HepG2 (cell line): ENCODE measurements at regions of chr20 and their contacts with region 1.

Region 1: GRCh38 chr20:36886859-36887751 is 11.2 kb downstream of the TLDC2 start:
- DNase-seq: peak; percentile 80
- ATAC-seq: peak; percentile 92
- H3K4me3 ChIP-seq: peak overlapping the region; percentile 2 to 63 (median 35); a peak in 4 of 6 replicates
- H3K27ac ChIP-seq: no peak overlapping the region
- H3K4me1 ChIP-seq: peaks cover 21% of the 10 kb centered on the region
- H3K27me3 ChIP-seq: no peaks in the 10 kb centered on the region
- CTCF ChIP-seq: peak; percentile 100
- EP300 ChIP-seq: no peak
- POLR2A ChIP-seq: 0 out of 4 replicates have a peak, but pooled peaks of 1 of the 2 experiments have one; percentile 10
- RAD21 ChIP-seq: peak; percentile 99

Region 2: DNA sequence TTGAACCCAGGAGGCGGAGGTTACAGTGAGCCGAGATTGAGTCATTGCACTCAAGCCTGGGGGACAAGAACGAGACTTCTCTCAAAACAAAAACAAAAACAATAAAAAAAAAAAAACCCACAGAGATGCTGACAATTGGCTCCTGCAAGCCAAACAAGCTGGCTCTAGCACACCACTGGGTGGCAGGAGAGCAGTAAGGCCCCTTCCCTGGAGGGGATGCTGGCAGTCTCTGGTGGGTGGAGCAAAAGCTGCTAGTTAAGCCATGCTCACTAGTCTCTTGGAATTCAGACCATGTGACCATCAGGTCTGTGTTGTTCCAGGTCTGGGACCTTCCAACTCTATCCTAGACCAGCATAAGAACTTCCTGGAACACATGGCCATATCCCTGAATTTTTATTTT is 94.7 kb before region 1 on chr20:
- CTCF ChIA-PET with region 1: interaction called, 3 read pairs
- POLR2A ChIA-PET with region 1: no interaction called
- in situ Hi-C with region 1: no loop called
- intact Hi-C with region 1: loop called (anchors 1 kb)
- DNase-seq: peak; percentile 80
- ATAC-seq: peak; percentile 77
- H3K4me3 ChIP-seq: no peak overlapping the region
- H3K27ac ChIP-seq: no peak overlapping the region
- H3K4me1 ChIP-seq: no peaks in the 10 kb centered on the region
- H3K27me3 ChIP-seq: no peaks in the 10 kb centered on the region
- CTCF ChIP-seq: peak; percentile 54
- EP300 ChIP-seq: no peak
- POLR2A ChIP-seq: no peak
- RAD21 ChIP-seq: no peak

Region 3: DNA sequence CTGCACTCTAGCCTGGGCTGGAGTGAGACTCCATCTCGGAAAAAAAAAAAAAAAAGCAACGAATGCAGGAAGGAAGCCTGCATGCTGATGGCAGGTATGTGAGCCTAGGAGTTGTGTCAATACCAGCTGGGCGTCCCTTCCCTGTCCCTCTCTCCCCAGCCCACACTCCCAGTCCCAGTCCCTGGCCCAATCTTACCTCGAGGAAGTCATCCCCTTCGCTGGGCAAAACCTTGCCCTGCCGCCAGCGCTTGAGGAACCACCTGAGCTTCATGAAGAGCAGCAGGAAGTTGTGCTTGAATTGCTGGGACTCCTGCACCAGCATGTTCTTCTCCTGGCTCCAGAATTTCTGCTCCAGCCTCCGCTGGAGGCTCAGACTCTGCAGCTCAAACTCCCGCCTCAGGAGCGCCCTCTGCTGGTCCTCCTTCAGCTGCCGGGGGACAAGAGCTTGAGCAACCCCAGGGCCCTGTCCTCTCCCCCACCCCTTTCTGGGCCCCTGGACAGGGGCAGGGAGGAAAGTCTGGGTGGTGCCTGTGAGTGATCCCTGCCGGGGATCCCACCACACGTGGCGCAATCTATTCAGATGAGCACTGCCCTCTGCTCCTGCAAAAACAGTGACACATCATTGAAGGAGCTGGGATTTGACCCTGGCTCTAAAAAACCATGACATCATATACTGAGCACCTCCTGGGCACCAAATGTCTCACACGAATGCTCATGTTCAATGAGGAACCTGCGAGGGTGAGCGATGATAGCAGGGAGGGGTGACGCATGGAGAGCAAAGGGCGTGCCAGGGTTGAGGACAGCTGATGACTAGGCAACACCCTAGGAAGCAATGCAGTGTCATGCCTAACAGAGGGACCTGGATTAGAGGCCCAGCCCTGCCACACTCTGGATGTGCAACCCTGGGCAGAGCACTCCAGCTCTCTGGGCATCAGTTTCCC is 78.5 kb before region 1 on chr20:
- CTCF ChIA-PET with region 1: interaction called, 14 read pairs
- POLR2A ChIA-PET with region 1: interaction called, 5 read pairs
- in situ Hi-C with region 1: no loop called
- intact Hi-C with region 1: no loop called
- DNase-seq: peak; percentile 70
- ATAC-seq: peak; percentile 88
- H3K4me3 ChIP-seq: no peak overlapping the region
- H3K27ac ChIP-seq: peak overlapping the region; percentile 19
- H3K4me1 ChIP-seq: peaks cover 9% of the 10 kb centered on the region
- H3K27me3 ChIP-seq: no peaks in the 10 kb centered on the region
- CTCF ChIP-seq: peak; percentile 96
- EP300 ChIP-seq: peak in 1 of 2 experiments; percentile 34; a peak in 1 of 4 replicates
- POLR2A ChIP-seq: no peak
- RAD21 ChIP-seq: peak; percentile 83

Region 4: GRCh38 chr20:36835453-36836198 is 51.5 kb before region 1 on chr20:
- CTCF ChIA-PET with region 1: interaction called, 59 read pairs
- POLR2A ChIA-PET with region 1: no interaction called
- in situ Hi-C with region 1: loop called (anchors 5 kb)
- intact Hi-C with region 1: loop called (anchors 1 kb)
- DNase-seq: no peak
- ATAC-seq: no peak
- H3K4me3 ChIP-seq: no peak overlapping the region
- H3K27ac ChIP-seq: no peak overlapping the region
- H3K4me1 ChIP-seq: peaks cover 17% of the 10 kb centered on the region; the same call in 1 of the 2 replicates
- H3K27me3 ChIP-seq: no peaks in the 10 kb centered on the region
- CTCF ChIP-seq: no peak
- EP300 ChIP-seq: no peak
- POLR2A ChIP-seq: no peak
- RAD21 ChIP-seq: no peak

Region 5: DNA sequence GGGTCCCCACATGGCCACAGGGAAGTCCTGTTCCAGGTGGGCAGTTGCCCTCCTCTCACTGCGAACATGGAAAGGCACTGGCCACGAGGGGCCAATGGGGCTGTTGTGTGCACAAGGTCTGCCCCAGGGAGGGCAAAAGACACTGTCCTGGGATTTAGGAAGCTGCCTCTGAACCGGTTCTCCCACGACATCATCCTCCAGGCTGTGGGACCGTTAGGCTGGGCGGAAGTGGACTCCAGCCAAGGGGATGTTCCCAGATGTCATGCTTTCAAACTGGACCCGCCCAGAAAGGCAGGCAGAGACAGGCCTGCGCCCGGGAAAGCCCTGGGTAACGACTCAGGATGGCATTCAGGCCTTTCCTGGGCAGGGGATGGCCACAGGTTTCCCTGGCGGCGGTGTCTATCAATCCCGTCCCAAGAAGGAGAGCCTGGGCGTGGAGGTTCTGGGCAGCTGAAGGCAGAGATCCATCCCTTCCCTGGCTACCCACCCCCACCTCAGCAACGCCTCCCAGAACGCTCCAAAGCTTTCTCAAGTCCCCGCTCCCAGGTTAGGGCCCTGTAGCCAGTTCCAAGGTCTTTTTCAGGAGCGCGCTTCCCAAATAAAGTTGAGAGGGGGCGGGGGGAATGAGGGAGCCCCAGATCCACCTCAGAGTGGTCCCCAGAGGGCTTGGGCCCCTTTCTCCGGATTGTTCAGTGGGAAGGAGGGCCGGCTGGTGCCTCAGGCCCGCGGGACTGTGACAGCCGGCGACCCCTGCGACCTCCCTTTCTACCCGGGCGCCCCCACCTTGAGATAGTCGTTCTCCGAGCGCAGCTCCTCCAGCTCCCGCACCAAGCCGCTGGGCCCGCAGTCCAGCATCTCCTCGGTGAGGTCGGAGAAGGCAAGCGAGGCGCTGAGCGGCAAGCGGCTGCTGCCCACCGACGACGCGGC is 25.0 kb before region 1 on chr20:
- CTCF ChIA-PET with region 1: interaction called, 8 read pairs
- POLR2A ChIA-PET with region 1: interaction called, 9 read pairs
- in situ Hi-C with region 1: no loop called
- intact Hi-C with region 1: loop called (anchors 1 kb)
- DNase-seq: peak; percentile 87
- ATAC-seq: peak; percentile 63
- H3K4me3 ChIP-seq: peak overlapping the region; percentile 68 to 86 (median 73)
- H3K27ac ChIP-seq: peak overlapping the region; percentile 36
- H3K4me1 ChIP-seq: peaks cover 68% of the 10 kb centered on the region
- H3K27me3 ChIP-seq: peaks cover 1 to 17% of the 10 kb centered on the region in 2 experiments; a peak in 1 of 5 replicates
- CTCF ChIP-seq: 0 out of 2 replicates have a peak, but pooled peaks have one; percentile 8
- EP300 ChIP-seq: no peak; a peak in 1 of 4 replicates
- POLR2A ChIP-seq: peak; percentile 83 to 86
- RAD21 ChIP-seq: no peak

Region 6: DNA sequence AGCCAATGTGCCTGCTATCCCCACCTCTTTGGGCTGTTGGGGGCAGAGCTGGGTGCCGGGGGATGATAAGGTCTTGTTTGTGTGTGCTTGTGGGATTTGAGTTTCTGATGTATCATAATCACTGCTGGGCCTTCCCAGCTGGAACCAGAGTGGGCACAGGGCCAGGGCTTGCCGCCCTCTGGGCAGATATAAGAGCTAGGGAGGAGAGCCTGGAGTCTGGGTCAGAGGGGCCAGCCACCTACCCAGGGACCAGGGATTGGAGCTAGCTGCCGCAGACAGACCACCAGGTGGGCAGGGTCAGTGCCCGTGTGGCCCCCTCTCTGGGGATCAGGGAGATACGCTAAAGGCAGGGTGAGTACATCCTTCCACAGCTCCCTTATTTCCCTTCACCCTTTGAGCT is 14.3 kb before region 1 on chr20:
- CTCF ChIA-PET with region 1: no interaction called
- POLR2A ChIA-PET with region 1: interaction called, 18 read pairs
- in situ Hi-C with region 1: no loop called
- intact Hi-C with region 1: loop called (anchors 1 kb)
- DNase-seq: no peak
- ATAC-seq: no peak
- H3K4me3 ChIP-seq: peak overlapping the region in 1 of 3 experiments; percentile 64; a peak in 1 of 6 replicates
- H3K27ac ChIP-seq: no peak overlapping the region
- H3K4me1 ChIP-seq: peaks cover 63% of the 10 kb centered on the region
- H3K27me3 ChIP-seq: no peaks in the 10 kb centered on the region
- CTCF ChIP-seq: no peak
- EP300 ChIP-seq: no peak
- POLR2A ChIP-seq: no peak
- RAD21 ChIP-seq: no peak